ENCODE measurements at regions of chr22 and their contacts with region 1.

Region 1: GRCh38 chr22:46674367-46674781 is 54.2 kb downstream of the GRAMD4 start:
- H3K4me3 Mint-ChIP-seq: no peak overlapping the region
- H3K27ac Mint-ChIP-seq: peak overlapping the region; percentile 73
- H3K4me1 Mint-ChIP-seq: peaks cover 33% of the 10 kb centered on the region
- H3K27me3 Mint-ChIP-seq: no peaks in the 10 kb centered on the region

Region 2: DNA sequence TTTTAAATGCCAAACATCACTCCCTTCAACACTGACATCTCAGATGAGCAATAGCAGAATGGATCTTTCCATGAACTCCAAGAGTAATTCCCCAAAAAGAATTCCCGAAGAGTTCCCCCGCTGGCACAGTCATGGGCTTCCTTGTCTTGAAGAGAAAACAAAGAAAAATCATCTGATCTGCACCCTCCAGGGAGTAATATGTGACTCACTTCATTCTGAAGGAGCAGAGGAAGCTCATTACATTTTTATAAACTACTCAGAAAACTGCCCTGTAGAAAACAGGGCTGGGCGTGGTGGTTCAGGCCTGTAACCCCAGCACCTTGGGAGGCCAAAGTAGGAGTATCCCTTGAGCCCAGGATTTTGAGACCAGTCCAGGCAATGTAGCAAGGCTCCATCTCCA is 172.7 kb before region 1 on chr22:
- intact Hi-C with region 1: no loop called
- H3K4me3 Mint-ChIP-seq: no peak overlapping the region
- H3K27ac Mint-ChIP-seq: no peak overlapping the region
- H3K4me1 Mint-ChIP-seq: peaks cover 6% of the 10 kb centered on the region
- H3K27me3 Mint-ChIP-seq: peaks cover 47% of the 10 kb centered on the region

Region 3: GRCh38 chr22:46576556-46577367 is 97.6 kb before region 1 on chr22:
- intact Hi-C with region 1: loop called (anchors 5 kb)
- H3K4me3 Mint-ChIP-seq: peak overlapping the region; percentile 75
- H3K27ac Mint-ChIP-seq: peak overlapping the region; percentile 75
- H3K4me1 Mint-ChIP-seq: peaks cover 77% of the 10 kb centered on the region
- H3K27me3 Mint-ChIP-seq: peaks cover 9% of the 10 kb centered on the region

Region 4: GRCh38 chr22:46619830-46620501 is 54.4 kb before region 1 on chr22 and contains the start of gene GRAMD4:
- intact Hi-C with region 1: loop called (anchors 10 kb)
- H3K4me3 Mint-ChIP-seq: peak within 1 kb of the TSS; percentile 65
- H3K27ac Mint-ChIP-seq: peak within 1 kb of the TSS; percentile 73
- H3K4me1 Mint-ChIP-seq: peaks cover 83% of the 10 kb centered on the region
- H3K27me3 Mint-ChIP-seq: no peaks in the 10 kb centered on the region

Region 5: DNA sequence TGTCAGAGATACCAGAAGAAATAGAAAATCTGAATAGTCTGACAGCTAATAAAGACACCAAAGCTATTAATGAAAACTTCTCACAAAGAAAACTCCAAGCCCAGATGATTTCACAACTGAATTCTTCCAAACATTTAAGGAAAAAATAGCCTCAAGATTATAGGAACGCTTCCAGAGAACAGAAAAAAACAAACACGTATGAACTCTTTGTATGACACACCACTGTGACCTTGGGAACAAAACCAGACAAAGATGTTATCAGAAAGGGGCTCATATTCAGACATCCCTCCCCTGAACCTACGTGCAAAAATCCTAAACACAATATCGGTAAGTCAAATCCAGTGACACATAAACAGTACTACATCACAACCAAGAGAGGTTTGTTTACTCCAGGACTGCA is 40.2 kb after region 1 on chr22:
- intact Hi-C with region 1: no loop called
- H3K4me3 Mint-ChIP-seq: no peak overlapping the region
- H3K27ac Mint-ChIP-seq: no peak overlapping the region
- H3K4me1 Mint-ChIP-seq: no peaks in the 10 kb centered on the region
- H3K27me3 Mint-ChIP-seq: no peaks in the 10 kb centered on the region

Measured in dendritic cell treated with granulocyte-macrophage colony-stimulating factor and Interleukin-4, amounts not matched to agents 40 ng/mL and 50 ng/mL, for 4 days (primary cell).